ENCODE measurements at regions of chr17 and their contacts with region 1.

Region 1: DNA sequence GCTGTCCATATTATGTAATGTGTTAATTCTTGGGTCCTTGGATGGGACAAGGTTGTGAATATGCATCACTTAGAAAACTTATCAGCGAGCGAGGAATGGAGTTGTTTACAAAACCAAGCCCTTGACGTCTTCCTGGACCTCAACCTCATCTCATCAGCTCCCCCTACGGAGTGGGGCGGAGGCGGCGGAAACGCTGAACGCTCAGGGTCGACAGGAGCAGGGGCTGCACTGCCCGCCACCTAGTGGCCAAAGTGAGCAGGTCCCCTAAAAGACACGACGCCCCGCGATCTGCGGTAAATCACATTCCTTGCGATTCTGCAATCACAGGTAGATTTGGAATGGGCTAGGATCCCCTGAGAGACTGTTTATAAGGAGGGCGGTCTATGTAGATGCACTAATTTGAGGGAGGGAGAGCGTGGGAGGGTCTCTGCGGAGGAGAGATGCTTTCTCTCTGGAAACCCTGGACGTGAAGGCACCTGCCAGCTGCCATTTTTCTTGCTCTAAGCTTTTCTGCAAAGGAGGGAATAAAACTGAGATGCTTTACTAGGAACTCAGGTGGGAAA is 5.4 kb upstream of the ICAM2 start:
- DNase-seq: peak; percentile 95
- H3K4me3 Mint-ChIP-seq: peak overlapping the region; percentile 81
- H3K27ac Mint-ChIP-seq: peak overlapping the region; percentile 98
- H3K4me1 Mint-ChIP-seq: peaks cover 67% of the 10 kb centered on the region
- H3K27me3 Mint-ChIP-seq: no peaks in the 10 kb centered on the region

Region 2: DNA sequence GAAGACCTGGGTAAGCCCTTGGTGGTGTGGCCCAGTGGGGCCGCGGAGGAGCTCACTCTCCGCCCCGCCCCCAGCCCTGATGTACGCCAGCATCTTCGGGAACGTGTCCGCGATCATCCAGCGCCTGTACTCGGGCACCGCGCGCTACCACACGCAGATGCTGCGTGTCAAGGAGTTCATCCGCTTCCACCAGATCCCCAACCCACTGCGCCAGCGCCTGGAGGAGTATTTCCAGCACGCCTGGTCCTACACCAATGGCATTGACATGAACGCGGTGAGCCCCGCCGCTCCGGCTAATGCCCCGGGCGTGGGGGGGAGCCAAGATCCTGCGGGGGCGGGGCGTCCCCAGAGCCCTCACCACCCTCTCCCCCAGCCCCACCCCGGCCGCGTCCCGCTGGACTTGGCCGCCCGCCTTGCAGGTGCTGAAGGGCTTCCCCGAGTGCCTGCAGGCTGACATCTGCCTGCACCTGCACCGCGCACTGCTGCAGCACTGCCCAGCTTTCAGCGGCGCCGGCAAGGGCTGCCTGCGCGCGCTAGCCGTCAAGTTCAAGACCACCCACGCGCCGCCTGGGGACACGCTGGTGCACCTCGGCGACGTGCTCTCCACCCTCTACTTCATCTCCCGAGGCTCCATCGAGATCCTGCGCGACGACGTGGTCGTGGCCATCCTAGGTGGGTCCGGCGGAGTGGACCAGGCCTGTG is 487.7 kb before region 1 on chr17:
- CTCF ChIA-PET with region 1: no interaction called
- POLR2A ChIA-PET with region 1: no interaction called
- intact Hi-C with region 1: no loop called
- DNase-seq: peak; percentile 18
- H3K4me3 Mint-ChIP-seq: no peak overlapping the region
- H3K27ac Mint-ChIP-seq: no peak overlapping the region
- H3K4me1 Mint-ChIP-seq: peaks cover 3% of the 10 kb centered on the region
- H3K27me3 Mint-ChIP-seq: peaks cover 32% of the 10 kb centered on the region

Region 3: GRCh38 chr17:63741221-63742049 is 284.4 kb before region 1 on chr17 and contains the start of gene STRADA:
- CTCF ChIA-PET with region 1: no interaction called
- POLR2A ChIA-PET with region 1: no interaction called
- intact Hi-C with region 1: loop called (anchors 10 kb)
- DNase-seq: peak; percentile 100
- H3K4me3 Mint-ChIP-seq: peak within 1 kb of the TSS; percentile 91
- H3K27ac Mint-ChIP-seq: peak within 1 kb of the TSS; percentile 98
- H3K4me1 Mint-ChIP-seq: peaks cover 23% of the 10 kb centered on the region
- H3K27me3 Mint-ChIP-seq: no peaks in the 10 kb centered on the region
- total RNA-seq, gene STRADA: 64.8 to 69.7 TPM

Region 4: GRCh38 chr17:63790057-63790456 is 235.8 kb before region 1 on chr17:
- CTCF ChIA-PET with region 1: no interaction called
- POLR2A ChIA-PET with region 1: no interaction called
- intact Hi-C with region 1: no loop called
- DNase-seq: no peak
- H3K4me3 Mint-ChIP-seq: no peak overlapping the region
- H3K27ac Mint-ChIP-seq: no peak overlapping the region
- H3K4me1 Mint-ChIP-seq: peaks cover 2% of the 10 kb centered on the region
- H3K27me3 Mint-ChIP-seq: no peaks in the 10 kb centered on the region

Region 5: DNA sequence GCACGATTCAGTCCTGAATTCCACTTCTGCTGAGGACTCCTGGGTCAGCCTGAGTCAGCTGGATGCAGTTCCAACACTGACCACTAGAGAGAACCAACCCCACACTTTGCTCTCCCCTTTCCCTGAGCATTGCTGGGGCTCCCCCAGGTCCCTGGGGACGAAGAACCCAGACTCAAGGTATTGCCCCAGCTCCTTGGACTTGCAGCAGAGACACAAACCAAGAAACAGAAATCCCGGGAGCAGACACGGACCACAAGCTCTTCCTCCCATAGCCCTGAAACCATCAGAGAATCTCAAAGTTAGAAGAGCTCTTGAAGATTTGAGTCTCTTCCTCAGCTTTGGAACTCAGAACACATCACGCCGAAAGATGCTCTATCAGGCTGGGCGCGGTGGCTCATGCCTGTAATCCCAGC is 106.5 kb before region 1 on chr17:
- CTCF ChIA-PET with region 1: interaction called, 94 read pairs
- POLR2A ChIA-PET with region 1: interaction called, 4 read pairs
- intact Hi-C with region 1: loop called (anchors 1 kb)
- DNase-seq: peak; percentile 84
- H3K4me3 Mint-ChIP-seq: peak overlapping the region; percentile 27
- H3K27ac Mint-ChIP-seq: peak overlapping the region; percentile 44
- H3K4me1 Mint-ChIP-seq: peaks cover 6% of the 10 kb centered on the region
- H3K27me3 Mint-ChIP-seq: no peaks in the 10 kb centered on the region

Region 6: DNA sequence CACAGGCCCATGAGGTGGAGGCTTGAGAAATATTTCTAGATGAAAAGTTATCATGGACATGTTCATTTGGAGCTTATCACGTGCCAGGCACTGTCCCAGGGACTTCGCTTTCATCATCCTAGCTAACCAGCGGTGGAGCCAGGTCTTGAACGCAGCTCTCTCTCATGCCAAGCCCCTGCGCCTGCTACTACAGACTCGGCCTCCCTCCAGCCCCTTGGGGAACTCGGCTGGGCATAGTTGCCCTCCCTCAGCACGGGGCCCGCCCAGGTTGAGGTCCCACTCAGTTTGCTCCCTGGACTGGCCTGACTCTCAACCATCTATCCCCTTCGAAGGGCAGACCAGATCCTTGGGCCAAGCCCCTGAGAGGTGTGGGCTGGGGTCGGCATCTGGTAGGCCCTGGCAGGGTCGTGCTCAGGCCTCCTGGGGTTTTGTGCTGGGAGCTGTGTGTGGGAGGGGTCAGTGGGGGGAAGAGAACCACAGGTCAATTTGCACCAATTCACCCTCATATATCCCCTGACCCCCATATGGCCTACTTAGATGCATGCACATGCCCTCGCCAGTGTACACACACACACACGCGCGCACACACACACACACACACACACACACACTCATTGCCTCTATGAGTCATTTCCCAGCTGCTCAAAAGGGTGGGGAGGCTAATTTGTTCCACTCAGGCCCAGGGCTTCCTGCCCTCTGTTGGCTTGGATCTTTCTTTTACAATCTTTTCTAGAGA is 41.0 kb before region 1 on chr17:
- CTCF ChIA-PET with region 1: interaction called, 25 read pairs
- POLR2A ChIA-PET with region 1: no interaction called
- intact Hi-C with region 1: no loop called
- DNase-seq: peak; percentile 82
- H3K4me3 Mint-ChIP-seq: peak overlapping the region; percentile 20
- H3K27ac Mint-ChIP-seq: peak overlapping the region; percentile 80
- H3K4me1 Mint-ChIP-seq: peaks cover 18% of the 10 kb centered on the region
- H3K27me3 Mint-ChIP-seq: no peaks in the 10 kb centered on the region

Region 7: DNA sequence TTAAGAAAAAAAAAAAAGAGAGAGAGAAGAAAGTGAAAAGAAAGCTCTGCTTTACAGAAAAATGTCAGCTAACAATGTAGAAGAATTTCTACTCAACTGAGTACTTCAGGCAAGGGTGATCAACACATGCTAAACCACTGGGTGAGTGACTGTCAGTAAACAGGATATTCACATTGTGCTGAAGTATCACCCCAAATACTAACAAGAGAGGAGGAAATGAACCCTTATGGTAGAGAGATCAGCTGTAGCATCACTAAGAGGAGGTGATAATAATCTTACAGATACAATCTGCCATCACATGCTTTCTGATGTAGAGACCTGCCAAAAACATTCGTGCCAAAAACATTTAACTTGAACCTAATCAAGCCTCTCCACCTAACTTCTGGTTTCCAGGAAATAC is 25.3 kb after region 1 on chr17:
- CTCF ChIA-PET with region 1: interaction called, 31 read pairs
- POLR2A ChIA-PET with region 1: no interaction called
- intact Hi-C with region 1: no loop called
- DNase-seq: no peak
- H3K4me3 Mint-ChIP-seq: no peak overlapping the region
- H3K27ac Mint-ChIP-seq: peak overlapping the region; percentile 93
- H3K4me1 Mint-ChIP-seq: peaks cover 29% of the 10 kb centered on the region
- H3K27me3 Mint-ChIP-seq: no peaks in the 10 kb centered on the region

Region 8: DNA sequence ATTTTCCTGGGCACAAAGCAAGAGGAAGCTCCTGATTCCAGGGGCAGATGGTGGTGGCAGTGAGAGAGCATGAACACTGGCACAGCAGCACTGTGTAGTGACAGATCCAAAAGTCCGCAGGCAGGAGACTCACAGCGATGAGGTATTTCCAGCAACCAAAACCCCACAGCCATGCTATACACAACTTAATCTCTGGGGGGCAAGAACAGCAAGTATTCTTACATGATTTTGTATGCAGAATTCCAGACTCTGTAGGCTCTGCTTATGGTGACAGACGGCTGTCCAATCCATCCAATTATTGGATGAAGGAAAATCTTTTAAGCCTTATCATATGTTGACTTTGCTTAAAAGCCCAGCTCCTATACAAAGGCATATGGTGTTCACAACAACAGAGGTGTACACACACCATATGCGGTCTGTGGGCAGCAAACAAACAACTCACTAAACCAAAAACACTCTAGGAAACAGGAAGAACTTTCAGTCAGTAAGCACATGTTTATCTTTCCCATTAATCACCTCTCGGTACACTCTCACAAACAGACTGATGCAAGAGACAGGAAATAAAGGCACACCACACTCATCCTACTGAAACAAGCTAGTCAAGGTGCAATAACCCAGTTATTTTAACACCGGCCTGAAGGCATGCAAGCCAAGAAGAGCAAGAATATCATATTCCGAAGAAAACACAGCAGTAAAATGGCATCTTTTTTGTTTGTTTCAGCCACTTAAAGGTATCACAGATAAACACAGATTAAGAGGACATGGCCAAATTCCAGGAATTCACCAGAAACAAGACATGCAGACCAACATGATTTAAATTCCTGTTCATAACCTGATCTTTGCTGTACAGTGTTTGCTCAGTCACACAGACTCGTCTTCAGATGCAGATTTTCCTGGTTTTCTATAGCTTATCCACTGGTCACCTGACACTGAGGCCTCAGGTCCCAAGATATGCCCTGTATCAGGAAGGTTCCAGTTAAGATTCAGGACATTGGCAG is 56.3 kb after region 1 on chr17:
- CTCF ChIA-PET with region 1: interaction called, 10 read pairs
- POLR2A ChIA-PET with region 1: interaction called, 3 read pairs
- intact Hi-C with region 1: no loop called
- DNase-seq: peak; percentile 74
- H3K4me3 Mint-ChIP-seq: peak overlapping the region; percentile 49
- H3K27ac Mint-ChIP-seq: no peak overlapping the region
- H3K4me1 Mint-ChIP-seq: peaks cover 29% of the 10 kb centered on the region
- H3K27me3 Mint-ChIP-seq: no peaks in the 10 kb centered on the region

Region 9: GRCh38 chr17:64190488-64190887 is 164.7 kb after region 1 on chr17:
- CTCF ChIA-PET with region 1: no interaction called
- POLR2A ChIA-PET with region 1: no interaction called
- intact Hi-C with region 1: no loop called
- DNase-seq: no peak
- H3K4me3 Mint-ChIP-seq: no peak overlapping the region
- H3K27ac Mint-ChIP-seq: no peak overlapping the region
- H3K4me1 Mint-ChIP-seq: no peaks in the 10 kb centered on the region
- H3K27me3 Mint-ChIP-seq: no peaks in the 10 kb centered on the region

Region 10: GRCh38 chr17:64262417-64263260 is 236.8 kb after region 1 on chr17 and contains the start of gene TEX2:
- CTCF ChIA-PET with region 1: no interaction called
- POLR2A ChIA-PET with region 1: interaction called, 4 read pairs
- intact Hi-C with region 1: loop called (anchors 10 kb)
- DNase-seq: peak; percentile 77
- H3K4me3 Mint-ChIP-seq: peak within 1 kb of the TSS; percentile 96
- H3K27ac Mint-ChIP-seq: peak within 1 kb of the TSS; percentile 91
- H3K4me1 Mint-ChIP-seq: peaks cover 32% of the 10 kb centered on the region
- H3K27me3 Mint-ChIP-seq: no peaks in the 10 kb centered on the region
- total RNA-seq, gene TEX2: 11.9 to 12.1 TPM

Measured in activated CD4-positive, alpha-beta memory T cell treated with anti-CD3 and anti-CD28 coated beads for 36 hours (primary cell).